ENCODE measurements at regions of chr1 and their contacts with region 1.

Region 1: GRCh38 chr1:24805534-24806301 is 60.5 kb downstream of the CLIC4 start:
- DNase-seq: no peak
- H3K4me3 ChIP-seq: no peak overlapping the region
- H3K27ac ChIP-seq: peak overlapping the region; percentile 45
- H3K4me1 ChIP-seq: peaks cover 29% of the 10 kb centered on the region
- H3K27me3 ChIP-seq: no peaks in the 10 kb centered on the region
- CTCF ChIP-seq: no peak
- POLR2A ChIP-seq: no peak

Region 2: DNA sequence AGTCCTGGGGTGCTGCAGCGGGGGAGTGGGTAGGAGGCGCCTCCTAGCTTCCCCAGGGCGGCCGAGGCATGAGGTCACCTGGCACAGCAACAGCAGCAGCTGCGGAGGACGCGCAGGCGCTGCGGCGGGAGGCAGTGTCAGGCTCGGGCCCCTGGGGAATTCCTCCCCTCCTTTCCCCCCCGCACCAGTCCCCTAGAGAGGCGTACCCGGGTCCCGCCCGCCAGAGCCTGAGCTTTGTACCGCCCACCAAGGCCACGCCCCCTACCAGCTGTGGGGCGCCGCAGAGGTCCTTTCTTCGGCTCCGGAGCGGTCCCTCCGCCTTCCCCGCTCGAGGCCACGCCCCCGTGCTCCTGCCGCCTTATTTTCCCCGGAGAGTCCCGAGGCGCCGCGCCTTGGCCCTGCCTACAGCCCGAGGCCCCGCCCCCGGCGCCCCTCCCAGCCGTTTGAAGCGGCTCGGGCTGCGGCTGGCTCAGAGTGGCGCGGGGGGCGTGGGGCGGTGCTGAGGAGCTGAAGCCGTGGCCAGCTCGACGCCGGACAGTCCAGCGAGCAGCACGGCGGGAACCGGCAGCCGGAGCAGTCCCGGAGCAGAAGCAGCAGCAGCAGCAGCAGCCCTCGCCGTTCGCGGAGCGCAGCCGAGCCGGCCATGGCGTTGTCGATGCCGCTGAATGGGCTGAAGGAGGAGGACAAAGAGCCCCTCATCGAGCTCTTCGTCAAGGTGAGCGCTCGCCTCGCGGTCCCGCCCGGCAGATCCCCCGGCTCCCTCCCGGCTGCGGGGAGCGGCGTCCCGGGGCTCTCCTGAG is 60.6 kb before region 1 on chr1 and contains the start of gene CLIC4:
- intact Hi-C with region 1: loop called (anchors 10 kb)
- DNase-seq: peak; percentile 99
- H3K4me3 ChIP-seq: peak within 1 kb of the TSS; percentile 88 to 97
- H3K27ac ChIP-seq: peak within 1 kb of the TSS; percentile 98
- H3K4me1 ChIP-seq: peaks cover 43% of the 10 kb centered on the region
- H3K27me3 ChIP-seq: no peaks in the 10 kb centered on the region
- CTCF ChIP-seq: no peak
- POLR2A ChIP-seq: peak; percentile 96 to 100
- total RNA-seq, gene CLIC4: 164 TPM